ENCODE measurements at regions of chr5 and their contacts with region 1.

Region 1: GRCh38 chr5:14664302-14665100 is at the start of gene OTULIN:
- DNase-seq: peak; percentile 97
- CTCF ChIP-seq: no peak

Region 2: GRCh38 chr5:14676320-14676719 is 11.8 kb after region 1 on chr5:
- CTCF ChIA-PET with region 1: interaction called, 27 read pairs
- POLR2A ChIA-PET with region 1: interaction called, 3 read pairs
- DNase-seq: no peak
- CTCF ChIP-seq: no peak